Ovary (tissue), 10 donors: ENCODE measurements at regions of chr9 and their contacts with region 1.

Region 1: DNA sequence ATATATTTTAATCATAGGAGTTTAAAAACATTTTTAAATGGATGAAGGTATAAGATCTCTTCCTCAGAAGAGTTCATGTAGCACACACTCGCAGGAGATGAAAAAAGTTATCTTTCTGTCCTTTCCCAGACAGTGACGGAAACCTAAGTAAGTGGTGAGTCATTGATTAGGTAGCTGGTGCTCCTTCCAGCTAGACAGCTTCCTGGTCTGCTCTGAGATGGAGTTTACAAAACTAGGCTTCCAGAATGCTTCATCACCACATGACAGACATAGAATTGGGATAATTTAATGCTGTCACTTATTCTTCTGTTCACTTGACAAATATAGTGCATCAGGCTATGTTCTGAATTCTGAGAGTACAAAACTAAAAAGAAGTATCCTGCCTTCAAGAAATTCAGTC is 2393.0 kb upstream of the C9orf72 start:
- DNase-seq: no peak
- H3K4me3 ChIP-seq: no peak overlapping the region
- H3K27ac ChIP-seq: no peak overlapping the region
- H3K4me1 ChIP-seq: no peaks in the 10 kb centered on the region
- H3K27me3 ChIP-seq: no peaks in the 10 kb centered on the region
- CTCF ChIP-seq: no peak
- EP300 ChIP-seq: no peak
- POLR2A ChIP-seq: no peak

Region 2: DNA sequence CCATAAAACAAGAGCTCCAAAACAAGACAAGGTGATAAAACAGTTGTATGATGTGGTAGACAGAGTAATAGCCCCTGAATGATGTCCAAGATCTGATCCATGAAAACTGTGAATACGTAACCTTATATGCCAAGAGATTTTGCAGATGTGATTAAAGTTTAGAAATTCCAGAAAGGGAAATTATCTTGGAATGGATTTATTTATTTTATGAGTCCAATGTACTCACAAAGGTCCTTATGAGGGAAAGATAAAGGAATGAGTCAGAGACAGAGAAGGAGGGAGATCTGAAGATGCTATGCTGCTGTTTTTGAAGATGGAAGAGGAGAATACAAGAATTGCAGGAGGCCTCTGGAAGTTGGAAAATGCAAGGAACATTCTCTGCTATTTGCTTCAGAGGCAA is 617.2 kb before region 1 on chr9:
- intact Hi-C with region 1: no loop called
- DNase-seq: no peak
- H3K4me3 ChIP-seq: no peak overlapping the region
- H3K27ac ChIP-seq: no peak overlapping the region
- H3K4me1 ChIP-seq: no peaks in the 10 kb centered on the region
- H3K27me3 ChIP-seq: no peaks in the 10 kb centered on the region
- CTCF ChIP-seq: no peak
- EP300 ChIP-seq: no peak
- POLR2A ChIP-seq: no peak

Region 3: DNA sequence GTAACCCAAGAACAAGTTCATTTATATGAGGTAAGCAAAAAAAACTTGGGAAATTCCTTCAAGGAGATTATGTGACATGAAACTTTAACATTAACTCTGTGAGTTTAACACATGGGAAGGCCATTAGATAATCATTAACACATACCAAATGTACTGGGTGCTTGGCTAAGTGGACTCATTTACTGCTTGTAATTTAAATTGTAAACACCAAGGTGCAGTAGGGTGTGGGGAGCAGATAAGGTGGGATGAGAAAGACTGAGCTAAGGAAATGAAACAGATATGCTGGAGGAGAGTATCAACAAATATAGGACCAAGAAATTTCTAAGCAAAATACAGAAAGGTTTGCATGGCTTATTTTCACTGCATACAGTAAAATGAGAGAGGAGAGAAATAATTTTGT is 33.4 kb after region 1 on chr9:
- intact Hi-C with region 1: loop called in 1 of 4 experiments (anchors 5 kb)
- DNase-seq: no peak
- H3K4me3 ChIP-seq: no peak overlapping the region
- H3K27ac ChIP-seq: no peak overlapping the region
- H3K4me1 ChIP-seq: no peaks in the 10 kb centered on the region
- H3K27me3 ChIP-seq: no peaks in the 10 kb centered on the region
- CTCF ChIP-seq: no peak
- EP300 ChIP-seq: no peak
- POLR2A ChIP-seq: no peak